GM12878 (cell line): ENCODE measurements at regions of chr12 and their contacts with region 1.

Region 1: DNA sequence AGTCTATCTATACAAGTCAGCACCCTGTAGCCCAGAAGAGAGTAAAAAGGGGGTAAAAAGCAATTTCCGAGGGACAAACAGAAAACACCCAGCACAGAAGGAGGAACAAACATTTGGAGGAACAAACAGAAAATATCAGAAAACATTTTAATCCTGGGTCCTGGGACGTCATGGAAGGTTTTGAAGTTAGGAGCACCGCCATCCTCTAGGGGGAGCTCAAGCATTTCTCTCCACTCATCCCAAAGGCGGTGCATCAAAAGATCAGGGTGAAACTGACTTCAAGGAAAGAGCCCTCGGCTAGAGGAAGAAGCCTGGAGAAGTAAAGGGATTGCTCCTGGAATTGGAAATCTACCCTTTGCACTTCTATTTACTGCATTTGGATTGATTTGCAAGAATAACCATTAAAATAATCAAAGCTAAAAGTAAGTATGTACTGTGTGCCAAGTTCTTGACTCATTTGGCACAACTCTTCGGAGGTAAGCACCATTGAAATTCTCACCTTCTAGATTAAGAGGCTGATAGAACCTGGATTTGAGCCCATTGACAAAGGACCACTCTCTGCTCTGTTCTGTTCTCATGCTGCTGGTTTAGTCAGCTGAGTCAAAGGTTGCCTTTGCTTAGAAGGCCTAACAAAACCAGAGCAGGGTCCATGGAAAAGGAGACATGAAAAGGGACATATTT is 17.2 kb upstream of the POC1B start:
- DNase-seq: peak; percentile 38
- ATAC-seq: peak; percentile 94
- H3K4me3 ChIP-seq: no peak overlapping the region
- H3K27ac ChIP-seq: no peak overlapping the region
- H3K4me1 ChIP-seq: peaks cover 4% of the 10 kb centered on the region; the same call in 1 of the 2 replicates
- H3K27me3 ChIP-seq: no peaks in the 10 kb centered on the region
- CTCF ChIP-seq: peak; percentile 86 to 91 (median 89)
- EP300 ChIP-seq: no peak
- POLR2A ChIP-seq: no peak
- RAD21 ChIP-seq: peak; percentile 99

Region 2: GRCh38 chr12:89405626-89406345 is 137.3 kb before region 1 on chr12:
- CTCF ChIA-PET with region 1: no interaction called
- POLR2A ChIA-PET with region 1: no interaction called
- RAD21 ChIA-PET with region 1: no interaction called
- SMC1A ChIA-PET with region 1: no interaction called
- in situ Hi-C with region 1: no loop called
- intact Hi-C with region 1: no loop called
- DNase-seq: no peak
- ATAC-seq: no peak
- H3K4me3 ChIP-seq: no peak overlapping the region
- H3K27ac ChIP-seq: no peak overlapping the region
- H3K4me1 ChIP-seq: no peaks in the 10 kb centered on the region
- H3K27me3 ChIP-seq: no peaks in the 10 kb centered on the region
- CTCF ChIP-seq: no peak
- EP300 ChIP-seq: no peak
- POLR2A ChIP-seq: no peak
- RAD21 ChIP-seq: no peak

Region 3: GRCh38 chr12:89556976-89557375 is 13.9 kb after region 1 on chr12:
- CTCF ChIA-PET with region 1: interaction called, 17 read pairs
- POLR2A ChIA-PET with region 1: no interaction called
- RAD21 ChIA-PET with region 1: interaction called, 4 read pairs
- SMC1A ChIA-PET with region 1: interaction called, 11 read pairs
- in situ Hi-C with region 1: no loop called
- intact Hi-C with region 1: no loop called
- DNase-seq: no peak
- ATAC-seq: no peak
- H3K4me3 ChIP-seq: no peak overlapping the region
- H3K27ac ChIP-seq: no peak overlapping the region
- H3K4me1 ChIP-seq: no peaks in the 10 kb centered on the region
- H3K27me3 ChIP-seq: no peaks in the 10 kb centered on the region
- CTCF ChIP-seq: no peak
- EP300 ChIP-seq: no peak
- POLR2A ChIP-seq: no peak
- RAD21 ChIP-seq: no peak

Region 4: DNA sequence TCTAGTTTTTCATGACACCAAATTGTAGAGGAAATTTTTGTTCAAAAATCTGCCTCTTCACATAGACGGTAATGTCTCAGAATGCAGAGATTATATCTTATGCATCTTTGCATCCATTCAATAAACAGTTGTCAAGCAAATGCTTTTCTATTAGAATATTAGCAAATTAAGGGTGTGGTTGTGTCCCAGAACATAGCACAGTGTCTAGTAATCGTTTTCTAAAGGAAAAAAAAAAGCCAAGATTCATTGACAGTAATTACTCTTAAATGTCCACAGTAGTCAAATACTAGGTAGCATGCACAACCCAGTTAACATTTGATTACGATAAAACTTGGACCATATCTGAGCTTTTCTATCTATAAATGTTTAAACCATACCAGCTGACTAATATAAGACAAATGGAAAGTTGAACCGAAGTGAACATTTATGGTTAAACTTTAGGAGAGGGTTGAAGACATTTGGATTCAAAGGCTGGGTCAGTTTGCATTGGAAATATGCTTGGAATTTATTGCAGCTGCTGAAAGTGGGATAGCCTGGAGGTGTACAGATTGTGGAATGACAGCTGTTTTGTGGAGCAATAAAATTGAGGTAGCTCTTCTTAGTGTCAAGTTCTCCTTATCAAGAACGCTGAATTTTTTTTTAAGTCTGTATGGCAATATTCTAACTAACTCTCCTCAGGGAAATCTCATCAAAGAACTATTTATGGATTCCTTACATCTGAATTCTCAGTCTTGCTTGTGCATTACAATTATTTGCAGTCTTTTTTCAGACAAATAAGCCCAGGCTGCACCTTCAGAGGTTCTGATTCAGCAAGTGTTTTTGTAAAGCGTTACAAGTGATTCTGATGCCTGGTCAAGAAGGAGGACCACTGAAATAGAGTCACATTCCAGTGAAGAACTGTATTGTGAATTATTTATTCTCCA is 232.3 kb after region 1 on chr12:
- CTCF ChIA-PET with region 1: no interaction called
- POLR2A ChIA-PET with region 1: no interaction called
- RAD21 ChIA-PET with region 1: no interaction called
- SMC1A ChIA-PET with region 1: no interaction called
- in situ Hi-C with region 1: no loop called
- intact Hi-C with region 1: no loop called
- DNase-seq: no peak
- ATAC-seq: no peak
- H3K4me3 ChIP-seq: no peak overlapping the region
- H3K27ac ChIP-seq: no peak overlapping the region
- H3K4me1 ChIP-seq: no peaks in the 10 kb centered on the region
- H3K27me3 ChIP-seq: no peaks in the 10 kb centered on the region
- CTCF ChIP-seq: no peak
- EP300 ChIP-seq: no peak
- POLR2A ChIP-seq: no peak
- RAD21 ChIP-seq: no peak

Region 5: GRCh38 chr12:89856431-89856830 is 313.4 kb after region 1 on chr12:
- CTCF ChIA-PET with region 1: interaction called, 9 read pairs
- POLR2A ChIA-PET with region 1: no interaction called
- RAD21 ChIA-PET with region 1: interaction called, 13 read pairs
- SMC1A ChIA-PET with region 1: interaction called, 10 read pairs
- in situ Hi-C with region 1: no loop called
- intact Hi-C with region 1: loop called (anchors 5 kb)
- DNase-seq: peak; percentile 85
- ATAC-seq: peak; percentile 90
- H3K4me3 ChIP-seq: no peak overlapping the region
- H3K27ac ChIP-seq: peak overlapping the region; percentile 42
- H3K4me1 ChIP-seq: peaks cover 43% of the 10 kb centered on the region
- H3K27me3 ChIP-seq: no peaks in the 10 kb centered on the region
- CTCF ChIP-seq: no peak
- EP300 ChIP-seq: peak; percentile 97
- POLR2A ChIP-seq: no peak
- RAD21 ChIP-seq: peak; percentile 27; the same call in 1 of the 2 replicates

Region 6: DNA sequence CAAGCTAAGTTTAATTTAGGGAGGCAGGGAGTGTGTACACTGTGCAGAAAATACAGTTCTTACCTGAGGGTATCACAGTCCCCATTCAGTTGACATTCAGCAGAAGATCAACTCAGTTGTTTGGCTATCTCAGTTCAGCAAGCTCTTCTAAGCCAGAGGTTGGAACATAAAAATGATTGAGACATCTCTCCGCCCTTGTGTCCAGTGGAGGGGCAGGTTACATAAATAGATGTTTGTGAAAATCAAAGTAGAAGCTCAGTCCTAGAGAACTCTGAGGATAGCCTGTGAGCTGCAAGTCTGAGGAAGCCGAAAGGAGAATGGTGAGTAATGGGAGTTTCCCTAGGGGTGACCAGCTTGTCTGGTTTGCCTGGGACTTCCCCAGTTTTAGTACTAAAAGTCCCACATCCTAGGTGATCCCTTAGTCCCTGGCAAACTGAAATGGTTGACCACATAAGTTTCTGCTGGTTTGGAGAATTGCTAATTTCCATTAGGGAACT is 417.0 kb after region 1 on chr12:
- CTCF ChIA-PET with region 1: interaction called, 9 read pairs
- POLR2A ChIA-PET with region 1: no interaction called
- RAD21 ChIA-PET with region 1: interaction called, 6 read pairs
- SMC1A ChIA-PET with region 1: interaction called, 10 read pairs
- in situ Hi-C with region 1: no loop called
- intact Hi-C with region 1: no loop called
- DNase-seq: peak; percentile 68
- ATAC-seq: peak; percentile 90
- H3K4me3 ChIP-seq: peak overlapping the region; percentile 65; the same call in 1 of the 2 replicates
- H3K27ac ChIP-seq: peak overlapping the region; percentile 71
- H3K4me1 ChIP-seq: peaks cover 9% of the 10 kb centered on the region
- H3K27me3 ChIP-seq: no peaks in the 10 kb centered on the region
- CTCF ChIP-seq: no peak
- EP300 ChIP-seq: peak in 1 of 2 experiments; percentile 55; a peak in 1 of 4 replicates
- POLR2A ChIP-seq: no peak
- RAD21 ChIP-seq: no peak

Region 7: DNA sequence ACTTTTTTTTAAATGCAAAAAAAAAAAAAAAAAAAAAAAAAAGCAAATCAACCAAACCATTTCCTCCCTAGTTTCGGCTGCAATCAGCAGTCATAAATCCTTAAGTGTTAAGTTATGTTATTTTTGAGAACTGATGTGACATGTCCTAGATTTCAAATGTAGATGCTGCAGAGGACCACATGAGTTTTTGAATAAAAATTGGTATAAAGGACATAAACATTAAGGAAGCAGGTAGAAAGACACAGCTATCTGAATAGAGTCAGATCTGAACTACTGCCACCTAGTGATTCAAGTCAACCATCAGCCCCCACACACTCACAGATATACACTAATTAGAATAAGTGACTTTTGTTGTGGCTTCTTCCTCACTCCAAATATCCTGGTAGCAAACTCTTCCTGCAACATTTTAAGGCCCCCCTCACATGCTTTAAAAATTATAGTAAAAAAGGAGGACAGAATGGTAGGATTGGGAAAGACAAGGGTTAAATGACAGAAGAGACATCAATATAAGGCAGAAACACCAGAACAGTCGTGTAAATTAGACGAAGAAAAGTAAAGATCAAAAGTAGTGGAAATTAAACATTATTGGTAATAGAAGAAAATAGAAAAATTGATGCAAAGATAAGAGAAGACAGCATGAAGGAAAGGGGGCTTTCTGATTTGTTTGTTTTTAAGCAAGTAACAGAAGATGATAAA is 560.1 kb after region 1 on chr12:
- CTCF ChIA-PET with region 1: interaction called, 95 read pairs
- POLR2A ChIA-PET with region 1: interaction called, 7 read pairs
- RAD21 ChIA-PET with region 1: interaction called, 37 read pairs
- SMC1A ChIA-PET with region 1: interaction called, 93 read pairs
- in situ Hi-C with region 1: loop called (anchors 5 kb)
- intact Hi-C with region 1: loop called (anchors 1 kb)
- DNase-seq: peak; percentile 24
- ATAC-seq: peak; percentile 98
- H3K4me3 ChIP-seq: no peak overlapping the region
- H3K27ac ChIP-seq: no peak overlapping the region
- H3K4me1 ChIP-seq: no peaks in the 10 kb centered on the region
- H3K27me3 ChIP-seq: no peaks in the 10 kb centered on the region
- CTCF ChIP-seq: peak; percentile 56 to 62 (median 57)
- EP300 ChIP-seq: no peak
- POLR2A ChIP-seq: no peak
- RAD21 ChIP-seq: peak; percentile 63

Region 8: DNA sequence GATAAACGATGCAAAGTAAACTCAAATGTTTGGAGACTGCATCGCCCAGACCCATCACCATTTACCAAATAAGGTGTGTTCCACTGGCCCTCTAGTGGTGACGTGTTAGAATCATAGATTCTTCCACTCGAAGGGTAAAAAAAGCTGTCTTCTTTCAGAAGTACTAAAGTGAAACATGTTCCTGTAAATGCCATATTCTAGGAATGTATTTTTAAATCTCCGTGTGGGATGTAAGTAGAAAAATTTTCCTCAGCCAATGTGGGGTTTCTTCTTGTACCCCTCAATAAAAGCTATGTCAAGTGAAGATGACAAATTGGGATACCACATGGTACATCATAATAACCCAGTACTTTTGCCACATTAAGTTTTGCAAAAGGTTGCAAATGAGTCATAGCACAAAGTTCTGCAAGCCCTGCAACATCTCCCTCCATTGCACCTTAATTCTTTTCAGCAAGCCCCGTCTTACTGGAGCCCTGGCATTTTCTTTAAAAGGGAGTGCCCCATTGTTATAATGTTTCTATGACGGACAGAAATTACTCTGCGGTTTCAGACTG is 1311.2 kb after region 1 on chr12:
- CTCF ChIA-PET with region 1: interaction called, 9 read pairs
- POLR2A ChIA-PET with region 1: no interaction called
- RAD21 ChIA-PET with region 1: interaction called, 3 read pairs
- SMC1A ChIA-PET with region 1: no interaction called
- in situ Hi-C with region 1: no loop called
- intact Hi-C with region 1: loop called (anchors 5 kb)
- DNase-seq: no peak
- ATAC-seq: peak; percentile 82
- H3K4me3 ChIP-seq: no peak overlapping the region
- H3K27ac ChIP-seq: no peak overlapping the region
- H3K4me1 ChIP-seq: no peaks in the 10 kb centered on the region
- H3K27me3 ChIP-seq: no peaks in the 10 kb centered on the region
- CTCF ChIP-seq: peak; percentile 62 to 76 (median 68)
- EP300 ChIP-seq: no peak
- POLR2A ChIP-seq: no peak
- RAD21 ChIP-seq: peak; percentile 66